ENCODE measurements at regions of chr12 and their contacts with region 1.

Region 1: DNA sequence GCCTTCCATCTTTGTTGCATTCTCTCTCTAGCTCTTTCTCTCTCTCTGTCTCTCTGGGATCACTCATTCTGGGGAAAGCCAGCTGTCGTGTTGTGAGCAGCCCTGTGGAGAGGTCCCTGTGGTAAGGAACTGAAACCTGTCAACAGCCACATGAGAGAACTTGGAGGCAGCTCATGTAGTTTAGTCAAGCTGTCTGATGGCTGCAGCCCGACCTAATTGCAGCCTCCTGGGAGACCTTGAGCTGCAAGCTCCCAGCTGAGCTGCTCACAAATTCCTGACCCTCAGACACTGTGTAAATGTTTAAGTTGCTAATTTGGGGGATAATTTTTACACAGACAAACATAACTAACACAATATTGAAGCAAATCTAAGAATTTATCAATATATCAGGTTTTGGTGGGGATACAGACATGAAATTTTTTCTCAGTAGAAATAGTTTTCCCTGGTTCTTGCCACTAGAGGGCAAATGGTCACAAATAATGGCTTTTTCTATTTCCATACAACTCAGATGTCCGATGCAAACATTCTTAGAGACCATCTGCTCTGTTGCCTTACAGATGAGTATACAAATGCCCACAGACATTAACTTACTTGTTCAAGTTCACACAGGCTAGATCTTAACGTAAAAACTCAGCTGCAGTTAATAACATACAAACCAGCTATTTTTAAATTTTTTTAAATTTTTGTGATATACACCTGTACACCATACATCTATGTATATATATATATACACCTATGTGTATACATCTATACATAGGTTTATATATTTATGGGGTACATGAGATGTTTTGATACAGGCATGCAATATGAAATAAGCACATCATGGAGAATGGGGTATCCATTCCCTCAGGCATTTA is 15.5 kb upstream of the KRR1 start:
- DNase-seq: peak; percentile 70
- H3K4me3 ChIP-seq: no peak overlapping the region
- H3K27ac ChIP-seq: no peak overlapping the region
- H3K4me1 ChIP-seq: no peaks in the 10 kb centered on the region
- H3K27me3 ChIP-seq: no peaks in the 10 kb centered on the region
- CTCF ChIP-seq: peak; percentile 38 to 49
- POLR2A ChIP-seq: no peak

Region 2: DNA sequence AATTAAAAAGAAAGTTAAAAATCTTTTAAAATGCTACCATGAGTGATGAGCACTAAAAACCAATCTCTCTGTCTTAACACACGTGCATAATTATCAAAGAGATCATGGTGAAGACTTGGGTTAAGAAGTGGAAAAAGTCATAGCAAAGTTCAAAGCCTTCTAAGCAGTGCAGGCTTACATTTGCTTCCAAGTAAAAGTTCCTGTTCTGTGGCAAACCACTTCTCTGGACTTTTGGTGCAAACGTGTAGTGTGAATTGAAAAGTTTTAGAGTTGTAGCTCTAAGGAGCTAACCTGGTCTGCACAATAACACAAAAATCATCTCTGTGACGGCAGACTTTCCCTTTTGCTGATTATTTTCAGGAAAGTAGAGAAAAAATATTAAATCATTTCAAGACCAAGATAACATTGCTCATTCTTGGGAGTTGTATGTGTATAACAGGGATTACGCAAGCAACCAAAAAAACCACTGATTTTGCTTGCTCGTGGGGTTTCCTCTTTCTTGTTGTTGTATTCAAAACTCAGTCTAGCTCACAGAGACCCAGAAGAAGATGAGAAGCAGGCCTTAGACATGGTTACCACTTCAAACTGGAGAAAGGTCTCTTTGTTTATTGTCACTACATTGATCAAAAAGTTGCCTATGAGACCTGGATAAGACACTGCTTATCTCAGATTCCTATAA is 48.6 kb before region 1 on chr12:
- CTCF ChIA-PET with region 1: no interaction called
- POLR2A ChIA-PET with region 1: no interaction called
- dilution Hi-C with region 1: no loop called
- intact Hi-C with region 1: no loop called
- DNase-seq: no peak
- H3K4me3 ChIP-seq: no peak overlapping the region
- H3K27ac ChIP-seq: no peak overlapping the region
- H3K4me1 ChIP-seq: peaks cover 18% of the 10 kb centered on the region
- H3K27me3 ChIP-seq: peaks cover 5 to 6% of the 10 kb centered on the region in 2 experiments
- CTCF ChIP-seq: no peak
- POLR2A ChIP-seq: no peak

Region 3: DNA sequence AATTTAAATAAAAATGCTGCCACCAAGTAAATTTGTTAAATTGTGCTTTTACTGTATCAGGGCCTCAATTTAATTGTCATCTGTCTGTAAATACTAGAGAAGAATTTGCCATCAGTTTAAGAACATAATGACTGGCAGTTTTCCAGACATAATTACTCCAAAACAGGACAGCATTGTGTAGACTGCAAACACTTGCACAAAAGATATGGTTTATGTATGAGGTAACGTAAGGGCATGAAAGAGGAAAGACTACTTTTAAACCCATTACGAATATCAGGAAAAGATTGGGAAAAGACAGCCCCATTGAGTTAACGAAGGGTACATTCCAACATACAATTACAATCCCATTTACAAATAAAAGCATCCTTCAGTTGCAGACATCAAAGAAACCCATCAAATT is 44.3 kb after region 1 on chr12:
- CTCF ChIA-PET with region 1: no interaction called
- POLR2A ChIA-PET with region 1: no interaction called
- dilution Hi-C with region 1: no loop called
- intact Hi-C with region 1: no loop called
- DNase-seq: peak; percentile 86
- H3K4me3 ChIP-seq: no peak overlapping the region
- H3K27ac ChIP-seq: no peak overlapping the region
- H3K4me1 ChIP-seq: peaks cover 4% of the 10 kb centered on the region
- H3K27me3 ChIP-seq: no peaks in the 10 kb centered on the region
- CTCF ChIP-seq: no peak
- POLR2A ChIP-seq: no peak

Region 4: DNA sequence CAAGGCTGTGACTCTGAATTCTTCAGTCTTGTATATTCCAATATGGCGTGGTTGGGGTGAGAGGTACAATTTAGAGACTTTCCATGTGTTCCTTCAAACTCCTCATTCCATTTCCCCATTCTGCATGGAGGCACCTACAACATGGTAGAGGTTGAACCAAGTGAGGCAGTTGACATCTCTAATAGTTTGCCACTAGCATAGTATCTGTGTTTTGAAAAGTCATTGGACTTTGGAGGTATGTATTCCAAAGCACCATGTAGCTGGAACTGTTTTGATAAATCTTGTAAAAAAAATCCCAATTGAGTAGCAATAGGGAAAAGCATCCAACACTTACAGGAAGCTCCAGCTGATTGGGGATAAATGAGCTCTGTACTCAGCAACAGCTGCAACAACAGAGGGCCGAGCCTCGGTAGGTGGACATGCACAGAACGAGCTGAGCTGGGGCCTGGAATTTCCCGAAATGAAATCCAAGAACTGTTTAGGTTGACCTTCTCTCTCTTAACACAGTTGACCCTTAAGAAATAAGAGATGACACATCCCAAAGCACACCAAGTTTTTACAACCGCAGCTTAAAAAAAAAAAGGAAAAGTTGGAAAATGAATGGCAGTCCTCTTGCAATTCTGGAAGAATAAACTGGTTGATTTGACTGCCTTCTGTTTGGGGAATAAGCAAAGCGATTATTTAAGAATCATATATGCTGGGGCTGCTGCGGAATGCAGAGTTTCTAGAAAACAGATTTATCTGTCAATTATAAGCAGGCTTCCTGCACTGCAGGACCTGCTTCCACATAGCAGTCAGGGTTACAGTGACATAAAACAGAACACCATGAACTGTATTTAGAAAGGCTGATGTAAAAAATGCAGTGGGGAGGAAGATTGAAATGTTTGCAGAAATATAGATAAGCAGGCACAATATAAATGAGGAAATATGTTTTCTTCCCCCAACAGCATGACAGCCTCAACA is 179.1 kb after region 1 on chr12:
- CTCF ChIA-PET with region 1: interaction called, 6 read pairs
- POLR2A ChIA-PET with region 1: no interaction called
- dilution Hi-C with region 1: no loop called
- intact Hi-C with region 1: loop called (anchors 2 kb)
- DNase-seq: peak; percentile 98
- H3K4me3 ChIP-seq: peak overlapping the region in 1 of 3 experiments; percentile 37
- H3K27ac ChIP-seq: peak overlapping the region; percentile 84
- H3K4me1 ChIP-seq: peaks cover 44% of the 10 kb centered on the region
- H3K27me3 ChIP-seq: no peaks in the 10 kb centered on the region
- CTCF ChIP-seq: no peak
- POLR2A ChIP-seq: peak; percentile 49

Region 5: DNA sequence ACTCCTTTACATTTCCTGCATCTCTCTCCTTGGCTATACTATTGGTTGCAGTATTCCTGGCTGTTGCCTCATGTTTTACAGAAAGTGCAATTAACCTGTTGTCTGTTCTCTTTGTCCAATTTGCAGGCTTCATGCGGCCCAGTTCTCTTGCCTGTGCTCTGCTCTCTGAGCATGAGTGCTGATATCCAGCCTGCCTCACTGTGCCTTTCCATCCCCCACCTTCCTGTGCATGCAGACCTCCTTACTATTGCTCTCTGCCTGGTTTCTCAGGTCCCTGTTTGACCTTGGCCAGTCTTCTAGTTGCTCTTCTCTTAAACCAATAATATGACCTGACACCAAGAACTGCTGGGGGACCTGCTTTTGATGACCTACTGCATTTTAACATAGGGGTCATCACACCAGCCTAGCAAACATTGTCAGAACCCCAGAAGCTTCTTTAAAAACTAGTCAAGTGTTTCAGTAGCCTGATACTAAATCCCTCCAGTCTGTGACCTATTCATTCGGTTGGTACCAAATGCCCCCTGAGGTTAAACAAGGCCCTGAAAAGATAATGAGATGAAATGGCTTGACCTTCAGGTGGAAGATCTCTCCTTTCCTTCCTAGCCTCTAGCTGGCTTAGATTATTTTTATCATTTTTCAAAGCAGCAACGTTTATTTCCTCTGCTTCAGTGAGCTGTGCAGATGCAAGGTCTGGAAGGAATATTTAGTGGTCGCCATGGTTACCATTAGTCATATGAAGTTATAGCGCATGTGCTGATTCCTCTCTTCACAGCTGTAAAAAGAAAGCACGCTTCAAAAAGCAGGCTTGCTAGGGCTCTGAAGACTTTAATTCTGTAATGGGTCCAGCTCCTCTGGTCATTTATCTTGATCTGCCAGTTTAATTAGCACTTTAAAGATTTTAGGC is 288.2 kb after region 1 on chr12:
- CTCF ChIA-PET with region 1: interaction called, 11 read pairs
- POLR2A ChIA-PET with region 1: no interaction called
- dilution Hi-C with region 1: no loop called
- intact Hi-C with region 1: loop called (anchors 1 kb)
- DNase-seq: peak; percentile 95
- H3K4me3 ChIP-seq: no peak overlapping the region
- H3K27ac ChIP-seq: peak overlapping the region; percentile 19
- H3K4me1 ChIP-seq: peaks cover 10% of the 10 kb centered on the region
- H3K27me3 ChIP-seq: no peaks in the 10 kb centered on the region
- CTCF ChIP-seq: no peak
- POLR2A ChIP-seq: no peak

Region 6: DNA sequence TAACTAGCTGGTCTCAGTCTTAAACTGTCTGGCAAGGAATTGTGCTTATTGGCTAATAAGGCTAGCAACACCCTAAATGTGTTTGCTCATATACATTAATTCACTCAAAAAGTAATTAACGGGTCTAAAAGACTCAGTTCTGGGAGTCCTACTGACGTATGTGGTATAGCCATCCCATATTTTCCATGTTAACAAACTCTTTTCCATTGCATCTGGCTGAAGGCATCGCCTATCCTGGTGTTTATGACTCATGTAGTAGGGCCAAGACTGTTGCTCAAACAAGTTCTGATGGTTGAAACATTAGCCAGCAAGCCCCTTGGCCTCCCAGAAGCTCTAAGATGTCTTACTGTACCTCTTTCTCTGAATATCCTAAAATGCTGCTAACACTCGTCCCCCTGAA is 406.2 kb after region 1 on chr12:
- CTCF ChIA-PET with region 1: interaction called, 3 read pairs
- POLR2A ChIA-PET with region 1: no interaction called
- dilution Hi-C with region 1: no loop called
- intact Hi-C with region 1: loop called (anchors 2 kb)
- DNase-seq: peak; percentile 27
- H3K4me3 ChIP-seq: no peak overlapping the region
- H3K27ac ChIP-seq: no peak overlapping the region
- H3K4me1 ChIP-seq: peaks cover 20% of the 10 kb centered on the region
- H3K27me3 ChIP-seq: peaks cover 13% of the 10 kb centered on the region in 2 experiments
- CTCF ChIP-seq: no peak
- POLR2A ChIP-seq: no peak

Region 7: GRCh38 chr12:76158518-76159321 is 631.8 kb after region 1 on chr12:
- CTCF ChIA-PET with region 1: no interaction called
- POLR2A ChIA-PET with region 1: no interaction called
- dilution Hi-C with region 1: no loop called
- intact Hi-C with region 1: loop called (anchors 10 kb)
- DNase-seq: peak; percentile 78
- H3K4me3 ChIP-seq: no peak overlapping the region
- H3K27ac ChIP-seq: no peak overlapping the region
- H3K4me1 ChIP-seq: peaks cover 4% of the 10 kb centered on the region
- H3K27me3 ChIP-seq: no peaks in the 10 kb centered on the region
- CTCF ChIP-seq: peak; percentile 74 to 77
- POLR2A ChIP-seq: no peak